KBM-7 (cell line): ENCODE measurements at regions of chr11 and their contacts with region 1.

Region 1: DNA sequence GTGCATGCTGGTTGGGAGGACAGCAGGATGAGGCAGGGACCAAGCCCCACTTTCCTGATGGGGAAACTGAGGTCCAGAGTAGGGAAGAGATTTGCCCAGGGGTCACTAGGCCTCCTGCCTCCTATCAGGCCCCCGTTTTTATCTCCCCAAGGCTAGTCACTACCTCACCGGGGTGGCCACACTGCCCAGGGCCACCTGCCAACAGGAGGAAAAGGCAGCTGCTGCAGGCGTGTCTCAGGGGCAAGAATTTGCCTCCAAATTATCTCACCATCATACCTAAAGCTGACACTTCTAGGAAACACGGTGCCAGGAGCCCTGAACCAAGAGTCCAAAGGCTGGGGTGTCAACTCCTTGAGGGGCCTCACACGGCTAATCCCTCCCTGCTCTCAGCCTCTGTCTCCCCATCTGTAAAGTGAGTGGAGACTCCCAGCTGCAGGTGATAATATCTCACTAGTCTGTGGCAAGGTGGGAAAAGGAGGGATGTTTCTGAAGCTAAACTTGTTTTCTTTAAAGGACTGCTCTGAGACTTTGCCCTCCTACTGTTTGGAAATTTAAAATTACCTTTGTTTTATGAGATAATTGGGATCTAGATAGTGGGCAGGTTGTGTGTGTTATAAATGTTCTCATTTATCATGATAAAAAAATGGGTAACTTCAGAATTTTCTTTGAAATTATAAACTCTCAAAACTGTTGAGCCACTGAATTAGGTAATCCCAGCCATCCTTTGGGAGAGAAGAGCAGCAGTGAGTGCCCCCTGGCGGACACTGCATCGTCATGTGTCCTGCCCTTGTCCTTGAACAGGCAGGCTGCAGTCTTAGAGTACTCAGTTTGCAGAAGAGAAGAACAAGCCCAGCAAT is 60.0 kb downstream of the MYO7A start:
- DNase-seq: peak; percentile 86

Region 2: DNA sequence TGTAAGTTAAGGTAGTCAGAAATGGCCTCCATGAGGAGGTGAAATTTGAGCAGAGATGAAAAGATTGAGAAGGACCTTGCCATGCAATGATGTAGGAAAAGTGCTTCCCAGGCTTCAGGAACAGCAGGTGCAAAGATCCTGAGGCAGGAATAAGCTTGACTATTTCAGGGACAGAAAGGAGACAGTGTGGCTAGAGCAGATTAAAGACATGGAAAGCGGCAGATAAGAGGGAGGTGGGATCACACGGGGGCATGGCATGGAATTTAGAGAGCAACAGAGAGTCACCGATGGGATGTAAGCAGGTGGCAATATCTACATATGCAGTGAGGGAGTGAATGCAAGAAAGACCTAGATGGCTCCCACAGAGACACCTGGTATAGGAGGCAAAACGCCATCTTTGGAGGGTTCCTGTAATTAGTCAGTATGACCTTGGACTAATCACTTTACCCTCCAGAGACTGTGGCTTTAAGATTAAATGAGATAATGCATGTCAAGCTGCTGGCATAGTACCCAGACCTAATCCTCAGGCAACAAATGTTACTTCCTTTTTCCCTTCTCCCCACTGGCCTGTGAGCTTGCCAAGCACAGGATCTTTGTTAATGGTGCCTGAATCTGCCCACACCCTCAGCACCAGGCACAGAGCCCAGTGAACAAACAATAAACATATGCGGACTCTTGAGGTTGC is 351.9 kb before region 1 on chr11:
- in situ Hi-C with region 1: no loop called
- DNase-seq: peak; percentile 50

Region 3: GRCh38 chr11:77073328-77074001 is 114.5 kb before region 1 on chr11:
- in situ Hi-C with region 1: no loop called
- DNase-seq: no peak

Region 4: GRCh38 chr11:77127232-77127911 is 60.6 kb before region 1 on chr11:
- in situ Hi-C with region 1: loop called (anchors 10 kb)
- DNase-seq: peak; percentile 66

Region 5: GRCh38 chr11:77557554-77557953 is 369.6 kb after region 1 on chr11:
- in situ Hi-C with region 1: loop called (anchors 10 kb)
- DNase-seq: peak; percentile 34